Activated naive CD4-positive, alpha-beta T cell treated with anti-CD3 and anti-CD28 coated beads for 36 hours (primary cell): ENCODE measurements at regions of chr16 and their contacts with region 1.

Region 1: GRCh38 chr16:75198135-75198600 is 8.8 kb downstream of the CTRB2 start:
- DNase-seq: no peak
- H3K4me3 Mint-ChIP-seq: no peak overlapping the region
- H3K27ac Mint-ChIP-seq: no peak overlapping the region
- H3K4me1 Mint-ChIP-seq: peaks cover 9% of the 10 kb centered on the region
- H3K27me3 Mint-ChIP-seq: peaks cover 13% of the 10 kb centered on the region

Region 2: GRCh38 chr16:75116081-75116910 is 81.9 kb before region 1 on chr16 and contains the start of gene LDHD:
- CTCF ChIA-PET with region 1: no interaction called
- intact Hi-C with region 1: no loop called
- DNase-seq: no peak
- H3K4me3 Mint-ChIP-seq: peak within 1 kb of the TSS; percentile 34
- H3K27ac Mint-ChIP-seq: no peak within 1 kb of the TSS
- H3K4me1 Mint-ChIP-seq: peaks cover 8% of the 10 kb centered on the region
- H3K27me3 Mint-ChIP-seq: peaks cover 12% of the 10 kb centered on the region
- total RNA-seq, gene LDHD: 0.33 to 0.42 TPM

Region 3: GRCh38 chr16:75208961-75209451 is 10.8 kb after region 1 on chr16:
- CTCF ChIA-PET with region 1: interaction called, 17 read pairs
- intact Hi-C with region 1: no loop called
- DNase-seq: no peak
- H3K4me3 Mint-ChIP-seq: no peak overlapping the region
- H3K27ac Mint-ChIP-seq: no peak overlapping the region
- H3K4me1 Mint-ChIP-seq: no peaks in the 10 kb centered on the region
- H3K27me3 Mint-ChIP-seq: no peaks in the 10 kb centered on the region

Region 4: DNA sequence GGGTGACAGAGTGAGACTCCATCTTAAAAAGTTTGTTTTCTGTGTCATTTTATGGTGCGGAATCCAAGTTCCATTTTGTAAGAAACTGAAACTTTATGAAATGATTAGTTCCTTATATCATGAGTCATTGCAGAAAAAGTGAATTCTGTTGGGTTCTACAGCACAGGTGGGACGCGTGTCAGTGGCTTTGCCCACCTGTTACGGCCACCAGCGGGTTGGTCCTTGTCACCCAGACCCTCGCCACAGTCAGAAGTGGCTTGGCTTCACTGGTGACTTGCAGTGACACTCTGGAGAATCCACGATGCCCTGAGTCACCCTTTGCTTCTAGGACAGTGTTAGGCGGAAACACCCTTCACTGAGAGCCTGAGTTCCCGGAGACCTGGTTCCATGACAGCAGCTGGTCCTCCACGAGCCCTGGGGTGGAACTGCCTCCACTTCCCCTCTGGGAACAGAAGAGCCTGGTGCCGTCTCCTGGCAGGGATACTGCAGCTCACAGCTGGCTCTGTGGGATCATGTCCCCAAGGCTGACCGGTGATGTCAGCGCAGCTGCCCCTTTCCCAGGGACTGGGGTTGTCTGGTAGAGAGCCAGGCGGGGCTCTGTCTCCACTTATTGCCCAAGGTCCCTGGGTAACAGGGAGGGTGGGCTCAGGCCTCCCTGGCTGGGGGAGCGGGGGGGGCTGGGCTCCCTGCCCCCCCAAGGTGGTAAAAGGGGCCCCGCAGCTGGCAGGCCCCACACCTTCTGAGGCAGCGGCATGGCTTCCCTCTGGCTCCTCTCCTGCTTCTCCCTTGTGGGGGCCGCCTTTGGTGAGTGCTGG is 20.3 kb after region 1 on chr16 and contains the start of gene CTRB1:
- CTCF ChIA-PET with region 1: interaction called, 10 read pairs
- intact Hi-C with region 1: loop called (anchors 2 kb)
- DNase-seq: peak; percentile 30
- H3K4me3 Mint-ChIP-seq: peak within 1 kb of the TSS; percentile 19
- H3K27ac Mint-ChIP-seq: peak within 1 kb of the TSS; percentile 74
- H3K4me1 Mint-ChIP-seq: peaks cover 20% of the 10 kb centered on the region
- H3K27me3 Mint-ChIP-seq: no peaks in the 10 kb centered on the region
- total RNA-seq, gene CTRB1: not detected

Region 5: GRCh38 chr16:75351183-75351582 is 153.0 kb after region 1 on chr16:
- CTCF ChIA-PET with region 1: interaction called, 11 read pairs
- intact Hi-C with region 1: no loop called
- DNase-seq: no peak
- H3K4me3 Mint-ChIP-seq: no peak overlapping the region
- H3K27ac Mint-ChIP-seq: no peak overlapping the region
- H3K4me1 Mint-ChIP-seq: no peaks in the 10 kb centered on the region
- H3K27me3 Mint-ChIP-seq: no peaks in the 10 kb centered on the region

Region 6: GRCh38 chr16:75379911-75380847 is 182.0 kb after region 1 on chr16:
- CTCF ChIA-PET with region 1: interaction called, 41 read pairs
- intact Hi-C with region 1: loop called (anchors 1 kb)
- DNase-seq: peak; percentile 53
- H3K4me3 Mint-ChIP-seq: no peak overlapping the region
- H3K27ac Mint-ChIP-seq: no peak overlapping the region
- H3K4me1 Mint-ChIP-seq: peaks cover 51% of the 10 kb centered on the region
- H3K27me3 Mint-ChIP-seq: peaks cover 2% of the 10 kb centered on the region

Region 7: DNA sequence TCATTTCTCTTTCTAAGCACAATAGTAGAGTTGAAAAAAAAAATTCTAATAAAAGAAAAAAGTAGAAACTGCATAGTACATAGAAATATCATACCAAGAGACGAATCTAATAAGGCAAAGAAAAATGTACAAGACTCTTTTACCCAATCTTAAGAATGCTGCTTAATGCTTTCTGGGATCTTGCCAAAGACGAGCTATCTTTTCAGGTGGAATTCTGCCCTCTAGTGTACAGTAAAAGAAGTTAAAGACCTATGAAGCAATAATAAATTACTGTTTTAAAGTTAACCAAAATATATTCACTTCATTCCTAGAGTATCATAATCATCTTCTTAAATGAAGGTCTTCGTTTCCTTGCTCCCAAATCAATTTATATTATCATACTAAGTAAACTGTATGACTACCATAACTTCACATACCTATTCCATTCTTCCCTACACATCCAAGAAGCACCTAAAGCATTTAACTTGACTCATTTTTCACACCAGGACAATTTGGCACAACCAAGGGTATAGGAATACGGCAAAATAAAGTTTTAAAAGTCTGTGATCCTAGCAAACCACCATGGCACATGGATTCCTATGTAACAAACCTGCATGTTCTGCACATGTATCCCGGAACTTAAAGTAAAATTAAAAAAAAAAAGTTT is 187.5 kb after region 1 on chr16:
- CTCF ChIA-PET with region 1: interaction called, 41 read pairs
- intact Hi-C with region 1: loop called (anchors 1 kb)
- DNase-seq: no peak
- H3K4me3 Mint-ChIP-seq: no peak overlapping the region
- H3K27ac Mint-ChIP-seq: no peak overlapping the region
- H3K4me1 Mint-ChIP-seq: peaks cover 19% of the 10 kb centered on the region
- H3K27me3 Mint-ChIP-seq: peaks cover 2% of the 10 kb centered on the region

Region 8: DNA sequence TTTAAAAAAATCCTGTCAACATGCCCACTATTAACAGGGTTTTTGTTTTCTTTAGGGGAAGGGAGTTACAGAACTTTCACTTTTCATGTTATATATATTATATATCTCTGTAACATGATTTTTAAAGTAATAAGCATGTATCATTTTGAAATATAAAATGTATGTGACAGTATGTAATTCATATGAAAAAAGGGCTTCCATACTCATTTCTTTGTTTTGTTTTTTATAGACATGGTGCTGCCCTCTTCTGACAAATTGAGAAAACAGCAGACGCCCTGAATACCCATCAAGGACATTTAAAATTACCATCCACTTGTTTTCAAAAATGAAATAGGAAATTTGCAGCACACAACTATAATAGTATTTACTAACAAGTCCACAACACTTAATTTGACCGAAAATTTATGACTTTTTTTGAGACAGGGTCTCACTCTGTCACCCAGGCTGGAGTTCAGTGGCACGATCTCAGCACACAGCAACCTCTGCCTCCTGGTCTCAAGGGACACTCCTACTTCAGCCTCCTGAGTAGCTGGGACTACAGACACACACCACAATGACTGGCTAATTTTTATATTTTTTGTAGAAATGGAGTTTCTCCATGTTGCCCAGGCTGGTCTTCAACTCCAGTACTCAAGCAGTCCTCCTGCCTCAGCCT is 204.8 kb after region 1 on chr16:
- CTCF ChIA-PET with region 1: interaction called, 14 read pairs
- intact Hi-C with region 1: loop called (anchors 1 kb)
- DNase-seq: no peak
- H3K4me3 Mint-ChIP-seq: no peak overlapping the region
- H3K27ac Mint-ChIP-seq: no peak overlapping the region
- H3K4me1 Mint-ChIP-seq: peaks cover 27% of the 10 kb centered on the region
- H3K27me3 Mint-ChIP-seq: no peaks in the 10 kb centered on the region